Caco-2 (cell line): ENCODE measurements at regions of chr5 and their contacts with region 1.

Region 1: DNA sequence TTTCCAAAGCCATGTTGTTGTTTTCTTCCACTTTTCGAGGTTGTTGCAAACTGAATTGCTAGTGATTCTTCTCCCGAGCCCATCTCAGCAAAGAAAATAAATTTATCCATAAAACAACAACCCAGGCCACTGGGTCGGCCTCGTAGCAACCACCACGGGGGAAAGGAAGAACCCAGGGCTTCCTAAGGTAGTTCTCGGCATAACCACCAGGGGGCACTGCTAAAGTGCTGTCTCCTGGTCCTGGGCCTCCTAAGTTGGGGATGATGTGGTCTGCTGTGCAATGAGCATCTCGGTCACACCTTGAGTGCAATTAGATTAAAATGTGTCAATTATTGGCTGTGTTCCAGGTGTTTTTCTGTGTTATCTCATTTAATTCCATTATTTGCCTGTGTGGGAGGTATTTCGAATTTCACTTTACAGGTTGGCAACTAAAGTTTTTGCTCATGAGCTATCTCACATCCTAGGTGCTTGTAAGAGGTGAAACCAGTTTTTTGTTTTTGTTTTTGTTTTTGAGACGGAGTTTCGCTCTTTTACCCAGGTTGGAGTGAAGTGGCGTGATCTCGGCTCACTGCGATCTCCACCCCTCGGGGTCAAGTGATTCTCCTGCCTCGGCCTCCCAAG is 102.8 kb upstream of the DAP start:
- DNase-seq: peak; percentile 47 to 61
- H3K4me3 ChIP-seq: no peak overlapping the region
- H3K4me3 Mint-ChIP-seq: no peak overlapping the region
- H3K27ac Mint-ChIP-seq: no peak overlapping the region
- H3K4me1 ChIP-seq: peaks cover 16% of the 10 kb centered on the region
- H3K4me1 Mint-ChIP-seq: peaks cover 11% of the 10 kb centered on the region
- H3K27me3 ChIP-seq: no peaks in the 10 kb centered on the region
- H3K27me3 Mint-ChIP-seq: peaks cover 3% of the 10 kb centered on the region
- CTCF ChIP-seq: peak; percentile 71 to 89

Region 2: GRCh38 chr5:11046160-11046559 is 182.3 kb after region 1 on chr5:
- CTCF ChIA-PET with region 1: no interaction called
- POLR2A ChIA-PET with region 1: no interaction called
- intact Hi-C with region 1: loop called (anchors 5 kb)
- DNase-seq: no peak
- H3K4me3 ChIP-seq: no peak overlapping the region
- H3K4me3 Mint-ChIP-seq: no peak overlapping the region
- H3K27ac Mint-ChIP-seq: no peak overlapping the region
- H3K4me1 ChIP-seq: 0 out of 2 replicates have a peak, but pooled peaks cover 3% of the 10 kb centered on the region
- H3K4me1 Mint-ChIP-seq: peaks cover 6% of the 10 kb centered on the region
- H3K27me3 ChIP-seq: no peaks in the 10 kb centered on the region
- H3K27me3 Mint-ChIP-seq: no peaks in the 10 kb centered on the region
- CTCF ChIP-seq: no peak